ENCODE measurements at regions of chr9 and their contacts with region 1.

Region 1: DNA sequence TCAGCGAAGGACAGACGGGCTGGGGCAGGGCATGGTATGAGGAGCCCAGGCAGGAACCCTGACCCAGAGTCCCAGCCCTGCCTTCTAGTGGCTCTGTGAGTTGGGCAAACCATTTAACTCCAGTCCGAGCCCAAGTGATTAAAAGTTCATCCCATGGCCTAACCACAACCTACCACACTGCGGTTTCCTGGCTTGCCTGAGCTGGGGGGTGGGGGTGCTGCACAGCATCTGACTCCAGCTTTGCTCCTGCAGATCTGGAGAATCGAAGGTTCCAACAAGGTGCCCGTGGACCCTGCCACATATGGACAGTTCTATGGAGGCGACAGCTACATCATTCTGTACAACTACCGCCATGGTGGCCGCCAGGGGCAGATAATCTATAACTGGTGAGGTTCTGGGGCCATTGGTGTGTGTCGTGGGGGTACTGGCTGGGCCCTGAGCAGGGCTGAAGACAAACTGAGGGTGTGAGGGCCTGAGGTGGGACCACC is 49.0 kb downstream of the STOM start:
- DNase-seq: no peak
- ATAC-seq: no peak
- H3K4me3 ChIP-seq: no peak overlapping the region
- H3K27ac ChIP-seq: peak overlapping the region in 9 of 10 donors; percentile 45 to 98 (median 78)
- H3K4me1 ChIP-seq: peaks cover 27 to 97% (median 58%) of the 10 kb centered on the region in 9 donors
- H3K27me3 ChIP-seq: no peaks in the 10 kb centered on the region
- CTCF ChIP-seq: no peak

Region 2: DNA sequence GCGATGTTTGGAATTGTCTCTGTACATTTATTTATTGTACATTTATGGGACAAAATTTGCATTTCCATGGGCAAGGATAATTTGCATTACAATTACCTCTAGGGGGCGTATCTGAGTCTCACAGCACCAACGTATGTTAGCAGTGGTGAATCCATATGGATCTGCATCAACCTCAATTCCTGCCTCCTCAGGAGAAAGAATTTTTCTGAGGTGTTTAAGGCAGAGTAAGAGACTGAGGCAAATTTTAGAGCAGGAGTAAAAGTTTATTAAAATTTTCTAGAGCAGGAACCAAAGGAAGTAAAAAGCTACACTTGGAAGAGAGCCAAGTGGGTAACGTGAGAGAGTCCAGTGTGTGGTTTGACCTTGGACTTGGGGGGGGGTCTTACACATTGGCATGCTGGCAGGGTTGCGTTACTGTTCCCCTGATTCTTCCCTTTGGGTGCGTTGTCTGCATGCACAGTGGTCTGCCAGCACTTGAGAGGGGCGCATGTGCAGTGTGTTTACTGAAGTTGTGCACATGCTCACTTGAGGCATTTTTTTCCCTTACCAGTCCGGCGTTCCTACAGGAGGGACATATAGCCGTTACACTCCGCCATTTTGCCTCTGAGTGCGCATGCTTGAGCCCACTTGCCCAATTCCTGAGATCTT is 98.4 kb before region 1 on chr9:
- intact Hi-C with region 1: loop called in 3 of 10 experiments (anchors 2 to 10 kb)
- DNase-seq: no peak
- ATAC-seq: peak in 5 of 8 donors; percentile 37 to 69 (median 44)
- H3K4me3 ChIP-seq: no peak overlapping the region
- H3K27ac ChIP-seq: no peak overlapping the region
- H3K4me1 ChIP-seq: peaks cover 0 to 23% (median 0%) of the 10 kb centered on the region in 9 donors
- H3K27me3 ChIP-seq: no peaks in the 10 kb centered on the region
- CTCF ChIP-seq: peak; percentile 54 to 84 (median 74)

Region 3: DNA sequence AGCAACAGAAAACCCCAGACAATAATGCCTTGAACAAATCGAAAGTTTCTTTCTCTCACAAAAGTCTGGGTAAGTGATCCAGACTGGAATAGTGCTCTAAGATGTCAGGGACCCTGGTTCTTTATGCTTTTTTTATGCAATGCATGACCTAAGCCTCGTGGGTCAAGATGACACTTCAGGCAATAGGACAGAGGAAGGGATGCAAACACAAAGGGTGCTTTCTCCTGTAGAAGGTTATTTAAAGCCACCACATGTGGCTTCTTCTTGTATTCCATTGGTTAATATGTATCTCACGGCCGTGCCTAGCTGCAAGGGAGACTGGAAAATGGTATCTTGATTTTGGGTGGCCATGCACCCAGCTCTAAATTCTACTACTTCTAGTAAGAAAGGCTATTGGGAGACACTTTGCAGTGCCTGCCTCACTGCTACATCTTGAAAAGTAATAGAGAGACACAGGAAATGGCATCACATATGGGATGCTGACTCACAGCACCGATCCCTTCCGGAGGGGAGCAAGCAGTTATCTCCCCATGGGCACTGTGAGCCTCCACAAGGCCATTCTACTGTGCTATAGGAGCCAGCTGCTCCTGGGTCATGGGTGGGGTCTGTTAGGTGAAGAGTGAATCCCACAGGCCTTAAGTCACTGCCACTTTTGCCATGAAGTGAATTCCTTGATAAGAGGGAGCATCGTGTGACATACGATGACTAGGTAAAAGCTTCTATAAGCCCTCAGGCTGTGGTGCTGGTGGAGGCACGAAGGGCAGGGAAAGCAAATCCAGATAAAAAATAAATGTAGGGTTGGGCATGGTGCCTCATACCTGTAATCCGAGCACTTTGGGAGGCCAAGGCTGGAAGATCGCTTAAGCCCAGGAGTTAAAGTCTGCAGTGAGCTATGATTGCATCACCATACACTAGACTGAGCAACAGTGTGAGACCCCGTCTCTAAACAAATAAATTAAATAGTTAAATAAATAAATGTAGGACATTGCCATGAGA is 86.9 kb before region 1 on chr9:
- intact Hi-C with region 1: loop called in 1 of 10 experiments (anchors 5 kb)
- DNase-seq: no peak
- ATAC-seq: peak in 1 of 8 donors; percentile 57
- H3K4me3 ChIP-seq: no peak overlapping the region
- H3K27ac ChIP-seq: no peak overlapping the region
- H3K4me1 ChIP-seq: peaks cover 0 to 17% (median 0%) of the 10 kb centered on the region in 9 donors
- H3K27me3 ChIP-seq: no peaks in the 10 kb centered on the region
- CTCF ChIP-seq: no peak

Region 4: DNA sequence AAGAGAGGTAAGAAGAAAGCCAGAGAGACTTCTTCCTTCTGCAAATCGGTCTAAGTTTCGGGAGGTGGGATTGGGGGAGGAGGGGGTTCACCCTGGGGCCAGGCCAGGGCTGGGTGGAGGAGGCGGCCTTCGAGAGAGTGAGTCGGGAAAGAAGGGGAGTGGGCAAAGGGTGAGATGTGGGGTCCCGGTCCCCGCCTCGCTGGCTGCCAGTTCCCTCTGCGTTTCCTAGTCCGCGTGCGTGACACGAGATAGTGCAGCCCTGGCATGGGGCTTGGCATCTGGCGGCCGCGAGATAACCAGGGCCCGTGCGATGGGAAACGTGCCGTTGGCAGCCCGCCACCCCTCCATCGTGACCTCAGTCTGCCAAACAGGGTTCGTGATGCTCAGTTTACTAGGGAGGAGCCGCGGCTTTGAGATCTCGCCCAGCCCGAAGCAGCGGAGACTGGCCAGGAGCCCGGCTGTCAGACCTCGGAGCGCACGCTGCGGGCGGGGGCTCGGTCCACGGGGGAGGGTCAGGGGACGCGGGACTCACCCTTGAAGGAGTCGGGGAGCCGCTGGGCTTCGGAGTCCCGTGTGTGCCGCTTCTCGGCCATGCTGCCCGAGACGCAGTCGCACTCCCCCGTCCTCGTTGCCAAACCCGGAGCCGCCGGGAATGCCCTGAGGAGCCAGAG is 48.7 kb after region 1 on chr9 and contains the start of gene STOM:
- intact Hi-C with region 1: loop called in 8 of 10 experiments (anchors 1 to 10 kb)
- DNase-seq: peak; percentile 92 to 93
- ATAC-seq: peak; percentile 69 to 91 (median 76)
- H3K4me3 ChIP-seq: peak within 1 kb of the TSS; percentile 50 to 86 (median 78)
- H3K27ac ChIP-seq: peak within 1 kb of the TSS; percentile 88 to 99 (median 96)
- H3K4me1 ChIP-seq: peaks cover 3 to 87% (median 77%) of the 10 kb centered on the region in 9 donors
- H3K27me3 ChIP-seq: no peaks in the 10 kb centered on the region
- CTCF ChIP-seq: no peak
- total RNA-seq, gene STOM: 104 to 389 (median 181) TPM

Region 5: DNA sequence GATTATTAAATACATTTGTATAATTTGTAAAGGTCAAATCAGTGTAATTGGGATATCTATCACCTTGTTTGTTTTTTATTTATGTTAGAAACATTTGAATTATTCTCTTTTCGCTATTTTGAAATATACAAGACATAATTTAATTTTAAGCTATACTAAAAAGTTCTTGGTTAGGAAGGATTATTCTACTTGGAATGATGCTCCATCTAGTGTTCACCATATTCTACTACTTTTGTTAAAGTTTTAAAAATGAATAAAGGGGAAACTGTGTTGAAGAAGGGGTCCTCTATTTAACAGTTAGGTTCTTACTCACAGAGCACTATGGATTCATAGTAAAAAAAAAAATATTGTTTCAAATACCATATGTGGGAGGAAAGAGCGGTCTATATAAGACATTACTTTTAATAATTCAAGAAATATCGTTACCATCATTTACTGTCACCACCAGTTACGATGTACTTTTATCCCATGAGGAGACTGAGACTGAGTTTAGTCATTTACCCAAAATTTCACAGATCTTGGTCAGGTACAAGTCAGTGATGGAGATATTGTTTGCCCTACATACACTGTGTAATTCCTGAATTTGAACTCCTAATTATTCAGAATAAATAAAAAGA is 55.3 kb after region 1 on chr9:
- intact Hi-C with region 1: loop called (anchors 1 to 10 kb)
- DNase-seq: no peak
- ATAC-seq: peak in 1 of 8 donors; percentile 42
- H3K4me3 ChIP-seq: no peak overlapping the region
- H3K27ac ChIP-seq: peak overlapping the region in 2 of 10 donors; percentile 97
- H3K4me1 ChIP-seq: peaks cover 3 to 48% (median 38%) of the 10 kb centered on the region in 9 donors
- H3K27me3 ChIP-seq: no peaks in the 10 kb centered on the region
- CTCF ChIP-seq: peak; percentile 11 to 74 (median 55)

Region 6: DNA sequence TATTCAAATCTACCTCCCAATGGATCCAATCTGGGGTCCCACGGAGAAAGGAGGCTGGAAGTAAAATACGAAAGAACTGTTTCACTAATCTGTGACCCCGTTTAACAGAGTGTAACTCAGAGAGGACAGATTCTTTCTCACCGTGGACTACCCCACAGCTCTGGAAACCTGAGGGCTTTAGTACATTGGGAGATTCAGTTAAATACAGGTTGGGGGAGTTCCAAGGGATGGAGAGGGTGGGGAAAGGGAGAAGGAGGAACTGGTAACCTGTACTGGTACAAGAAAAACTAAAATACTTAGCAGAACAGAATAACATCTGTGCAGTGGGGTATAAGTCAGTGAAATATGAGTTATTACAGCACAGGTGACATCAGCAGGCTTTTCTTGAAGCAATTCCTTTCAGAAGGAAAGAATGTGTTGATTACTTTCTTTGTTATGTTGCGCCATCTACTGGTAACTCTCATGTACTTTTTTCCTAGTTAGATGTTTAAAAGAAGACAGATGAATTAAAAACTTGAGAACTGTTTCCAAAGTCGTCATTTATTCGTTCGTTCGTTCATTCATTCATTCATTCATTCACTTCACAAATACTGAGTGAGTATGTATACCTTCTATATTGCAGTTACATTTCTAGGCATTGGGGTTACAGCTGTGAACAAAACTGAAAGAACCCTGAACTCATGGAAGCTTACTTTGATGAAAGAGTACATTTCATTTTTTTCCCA is 79.0 kb after region 1 on chr9:
- intact Hi-C with region 1: loop called in 8 of 10 experiments (anchors 1 to 5 kb)
- DNase-seq: peak in 1 of 2 donors; percentile 19
- ATAC-seq: peak in 5 of 8 donors; percentile 46 to 68 (median 64)
- H3K4me3 ChIP-seq: no peak overlapping the region
- H3K27ac ChIP-seq: no peak overlapping the region
- H3K4me1 ChIP-seq: peaks cover 0 to 6% (median 0%) of the 10 kb centered on the region in 9 donors
- H3K27me3 ChIP-seq: no peaks in the 10 kb centered on the region
- CTCF ChIP-seq: peak; percentile 60 to 80 (median 72)

Measured in heart right ventricle (tissue), 16 donors.